Natural killer cell (primary cell): ENCODE measurements at regions of chr17 and their contacts with region 1.

Region 1: DNA sequence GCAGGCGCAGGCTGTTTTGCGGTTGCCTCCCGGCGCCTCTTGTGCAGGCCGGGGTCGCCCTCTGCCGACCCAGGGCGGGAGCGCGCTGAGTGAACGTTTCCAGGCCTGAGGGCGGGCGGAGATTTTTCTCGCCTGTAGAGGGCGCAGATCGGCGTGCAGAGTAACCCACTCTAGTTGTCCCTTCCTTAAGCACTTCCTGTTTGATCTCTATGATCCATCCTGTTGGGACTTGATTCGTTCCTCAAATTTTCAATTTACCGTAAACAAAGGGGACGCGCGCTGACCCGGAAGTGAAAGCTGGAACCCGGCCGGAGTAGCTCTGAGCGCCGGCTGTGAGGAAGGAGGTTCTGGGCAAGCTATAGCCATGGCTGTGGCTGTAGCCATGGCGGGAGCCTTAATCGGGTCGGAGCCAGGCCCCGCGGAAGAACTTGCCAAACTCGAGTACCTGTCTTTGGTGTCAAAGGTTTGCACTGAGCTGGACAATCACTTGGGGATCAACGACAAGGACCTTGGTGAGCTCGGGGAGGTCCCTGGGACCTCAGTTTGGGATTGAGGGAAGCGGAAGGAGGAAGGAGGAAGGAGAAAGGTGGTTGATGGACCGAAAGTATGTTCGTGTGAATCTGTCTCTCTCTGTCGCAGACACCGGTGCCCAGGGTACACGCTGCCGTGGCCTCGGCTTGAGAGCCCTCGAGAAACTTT is at the start of gene DHX8:
- DNase-seq: peak; percentile 99
- ATAC-seq: peak; percentile 94 to 99 (median 96)
- H3K4me3 ChIP-seq: peak within 1 kb of the TSS; percentile 86
- H3K4me3 Mint-ChIP-seq: peak within 1 kb of the TSS; percentile 100
- H3K27ac ChIP-seq: peak within 1 kb of the TSS; percentile 78
- H3K27ac Mint-ChIP-seq: peak within 1 kb of the TSS; percentile 97 to 100
- H3K4me1 ChIP-seq: peaks cover 22% of the 10 kb centered on the region
- H3K4me1 Mint-ChIP-seq: peaks cover 20 to 24% of the 10 kb centered on the region in 2 donors
- H3K27me3 ChIP-seq: no peaks in the 10 kb centered on the region
- H3K27me3 Mint-ChIP-seq: no peaks in the 10 kb centered on the region
- CTCF ChIP-seq: peak; percentile 100
- total RNA-seq, gene DHX8: 88.3 to 106 (median 105) TPM

Region 2: GRCh38 chr17:42997984-42998938 is 485.6 kb before region 1 on chr17 and contains the start of gene RPL27:
- intact Hi-C with region 1: loop called (anchors 10 kb)
- DNase-seq: peak; percentile 98 to 100
- ATAC-seq: peak; percentile 93 to 99 (median 95)
- H3K4me3 ChIP-seq: peak within 1 kb of the TSS; percentile 90
- H3K4me3 Mint-ChIP-seq: peak within 1 kb of the TSS; percentile 97
- H3K27ac ChIP-seq: peak within 1 kb of the TSS; percentile 93
- H3K27ac Mint-ChIP-seq: peak within 1 kb of the TSS; percentile 95 to 98
- H3K4me1 ChIP-seq: peaks cover 18% of the 10 kb centered on the region
- H3K4me1 Mint-ChIP-seq: peaks cover 25 to 28% of the 10 kb centered on the region in 2 donors
- H3K27me3 ChIP-seq: no peaks in the 10 kb centered on the region
- H3K27me3 Mint-ChIP-seq: no peaks in the 10 kb centered on the region
- CTCF ChIP-seq: peak; percentile 94
- total RNA-seq, gene RPL27: 555 to 671 (median 608) TPM

Region 3: DNA sequence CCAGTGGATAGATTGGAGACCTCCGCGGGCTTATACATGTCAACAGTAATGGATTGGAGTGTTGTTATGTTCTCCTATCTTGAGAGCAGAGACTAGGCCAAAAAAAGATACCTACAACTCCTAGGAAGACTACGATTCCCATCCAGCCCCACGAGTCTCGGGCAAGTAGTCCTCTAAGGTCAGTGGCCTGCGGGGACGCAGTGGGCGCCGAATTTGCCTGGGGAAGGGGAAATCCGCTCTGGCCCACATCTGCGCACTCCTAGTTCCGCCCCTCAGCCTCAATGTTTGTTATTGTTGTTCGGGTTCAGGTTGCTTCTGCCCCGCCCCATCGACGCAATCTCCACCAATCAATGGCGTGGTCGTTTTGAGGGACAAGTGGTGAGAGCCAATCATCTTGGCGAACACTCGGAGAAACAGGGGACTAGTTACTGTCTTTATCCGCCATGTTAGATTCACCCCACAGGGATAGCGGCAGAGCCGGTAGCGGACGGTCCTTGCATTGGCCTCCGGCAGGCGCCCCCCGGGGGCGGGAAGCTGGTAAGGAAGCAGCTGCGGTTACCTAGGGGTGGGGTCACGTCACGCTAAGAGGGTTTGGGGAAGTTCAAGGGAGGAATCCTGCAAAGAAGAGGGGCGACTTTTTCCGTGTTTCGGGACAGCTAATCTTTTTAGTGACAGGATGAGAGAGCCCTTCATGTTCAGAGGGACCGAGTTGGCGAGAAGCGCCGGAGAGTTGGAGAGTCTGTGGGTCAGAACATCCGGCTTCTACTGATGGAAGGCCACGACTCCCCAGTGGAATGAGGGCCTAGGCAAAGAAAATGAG is 312.8 kb before region 1 on chr17 and contains the start of gene NBR1:
- intact Hi-C with region 1: loop called (anchors 5 kb)
- DNase-seq: peak; percentile 94 to 99
- ATAC-seq: peak; percentile 72 to 91 (median 80)
- H3K4me3 ChIP-seq: peak within 1 kb of the TSS; percentile 87
- H3K4me3 Mint-ChIP-seq: no peak within 1 kb of the TSS
- H3K27ac ChIP-seq: peak within 1 kb of the TSS; percentile 99
- H3K27ac Mint-ChIP-seq: no peak within 1 kb of the TSS
- H3K4me1 ChIP-seq: peaks cover 28% of the 10 kb centered on the region
- H3K4me1 Mint-ChIP-seq: peaks cover 20 to 25% of the 10 kb centered on the region in 2 donors
- H3K27me3 ChIP-seq: no peaks in the 10 kb centered on the region
- H3K27me3 Mint-ChIP-seq: no peaks in the 10 kb centered on the region
- CTCF ChIP-seq: no peak
- total RNA-seq, gene NBR1: 63.3 to 74.8 (median 67.0) TPM

Region 4: GRCh38 chr17:43393944-43394482 is 89.8 kb before region 1 on chr17:
- intact Hi-C with region 1: loop called (anchors 1 kb)
- DNase-seq: peak; percentile 80 to 94
- ATAC-seq: peak; percentile 24 to 60 (median 42)
- H3K4me3 ChIP-seq: no peak overlapping the region
- H3K4me3 Mint-ChIP-seq: no peak overlapping the region
- H3K27ac ChIP-seq: no peak overlapping the region
- H3K27ac Mint-ChIP-seq: no peak overlapping the region
- H3K4me1 ChIP-seq: peaks cover 33% of the 10 kb centered on the region
- H3K4me1 Mint-ChIP-seq: peaks cover 24 to 25% of the 10 kb centered on the region in 2 donors
- H3K27me3 ChIP-seq: no peaks in the 10 kb centered on the region
- H3K27me3 Mint-ChIP-seq: no peaks in the 10 kb centered on the region
- CTCF ChIP-seq: peak; percentile 85

Region 5: GRCh38 chr17:43530278-43531081 is 46.7 kb after region 1 on chr17:
- intact Hi-C with region 1: no loop called
- DNase-seq: no peak
- ATAC-seq: no peak
- H3K4me3 ChIP-seq: no peak overlapping the region
- H3K4me3 Mint-ChIP-seq: no peak overlapping the region
- H3K27ac ChIP-seq: no peak overlapping the region
- H3K27ac Mint-ChIP-seq: no peak overlapping the region
- H3K4me1 ChIP-seq: peaks cover 6% of the 10 kb centered on the region
- H3K4me1 Mint-ChIP-seq: peaks cover 0 to 5% of the 10 kb centered on the region in 2 donors
- H3K27me3 ChIP-seq: no peaks in the 10 kb centered on the region
- H3K27me3 Mint-ChIP-seq: no peaks in the 10 kb centered on the region
- CTCF ChIP-seq: no peak